ENCODE measurements at regions of chr1 and their contacts with region 1.

Region 1: DNA sequence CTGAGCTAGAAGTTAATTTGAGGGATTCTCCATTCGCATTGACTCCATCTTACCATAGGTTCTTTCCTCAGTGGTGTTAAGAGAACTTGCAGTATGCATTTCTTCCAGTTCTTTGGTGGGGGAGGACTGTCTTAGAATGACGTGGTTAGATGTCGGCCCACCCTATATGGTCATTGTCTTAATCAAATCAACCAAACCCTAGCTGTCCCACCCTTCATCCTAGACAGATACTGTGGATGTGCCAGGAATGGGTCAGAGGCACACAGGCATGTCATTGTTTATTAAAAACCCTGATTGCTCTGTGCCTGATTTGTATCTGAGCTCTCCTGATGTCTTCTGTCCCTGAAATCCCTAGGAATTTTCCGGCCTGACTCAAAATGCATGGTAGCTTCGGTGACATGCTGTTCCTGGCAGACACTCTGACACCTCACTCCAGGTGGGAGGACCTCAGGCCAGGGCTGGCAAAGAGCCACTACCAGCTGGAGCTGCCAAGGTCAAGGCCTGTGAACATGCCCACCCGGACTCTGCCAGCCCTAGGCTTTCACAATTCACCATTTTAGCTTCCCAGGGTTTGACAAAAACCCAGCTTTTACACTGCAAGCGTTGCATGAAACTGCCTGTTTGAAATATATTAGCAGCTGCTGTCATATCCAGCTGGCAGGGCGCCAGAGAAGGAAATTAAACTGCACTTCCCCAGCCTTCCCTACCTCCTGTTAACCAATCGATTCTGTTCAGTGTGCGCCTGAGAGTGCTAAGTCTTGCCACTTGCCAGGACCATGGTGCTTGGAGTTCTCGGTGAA is 134.0 kb downstream of the FAM78B start:
- DNase-seq: no peak

Region 2: GRCh38 chr1:165738794-165739193 is 294.0 kb before region 1 on chr1:
- CTCF ChIA-PET with region 1: interaction called, 11 read pairs
- POLR2A ChIA-PET with region 1: no interaction called
- DNase-seq: no peak

Region 3: DNA sequence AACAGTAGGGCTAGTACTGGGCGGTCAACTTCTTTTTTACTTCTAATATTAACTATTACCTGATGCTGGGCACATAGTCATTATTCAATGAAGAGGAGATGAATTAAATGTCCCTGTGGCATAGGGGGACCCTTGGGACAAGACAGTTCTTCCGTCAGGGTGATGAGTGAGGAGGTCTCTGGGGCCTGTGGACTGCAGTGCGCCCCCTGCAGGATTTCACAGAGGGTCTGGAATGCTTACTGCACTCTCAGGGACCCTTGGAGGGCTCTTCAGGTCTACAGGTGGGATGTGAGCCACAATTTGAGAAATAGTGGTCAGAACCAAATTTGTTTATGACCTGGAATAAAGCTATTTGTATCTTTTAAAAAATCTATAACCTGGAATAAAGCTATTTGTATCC is 15.4 kb before region 1 on chr1:
- CTCF ChIA-PET with region 1: no interaction called
- POLR2A ChIA-PET with region 1: no interaction called
- DNase-seq: peak; percentile 29

Region 4: GRCh38 chr1:166069390-166069789 is 36.6 kb after region 1 on chr1:
- CTCF ChIA-PET with region 1: no interaction called
- POLR2A ChIA-PET with region 1: no interaction called
- DNase-seq: no peak

Region 5: DNA sequence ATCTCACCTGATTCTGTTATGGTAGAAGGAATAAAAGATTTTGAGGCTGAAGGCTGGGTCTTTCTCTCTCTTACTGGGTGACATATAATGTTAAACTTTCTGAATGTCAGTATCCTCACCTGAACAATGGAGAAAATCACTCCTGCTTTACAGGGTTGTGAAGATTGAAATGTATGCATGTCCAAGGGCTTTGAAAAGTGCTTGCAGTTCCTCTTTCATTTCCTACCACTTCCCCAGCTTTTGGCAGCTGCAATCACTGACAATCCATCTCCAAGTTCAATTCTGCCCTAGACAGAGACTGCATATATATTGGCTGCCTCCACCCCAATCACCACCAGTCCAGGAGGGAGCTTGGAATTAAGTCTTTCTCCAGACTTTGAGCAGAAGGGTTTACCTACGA is 94.2 kb after region 1 on chr1:
- CTCF ChIA-PET with region 1: no interaction called
- POLR2A ChIA-PET with region 1: no interaction called
- DNase-seq: no peak

Measured in HEK293T (cell line).